Psoas muscle (tissue), 8 donors: ENCODE measurements at regions of chr20 and their contacts with region 1.

Region 1: GRCh38 chr20:36460648-36461599 is 80.4 kb upstream of the MYL9 start:
- DNase-seq: peak; percentile 96 to 97
- ATAC-seq: peak; percentile 67 to 79 (median 70)
- H3K4me3 ChIP-seq: peak overlapping the region; percentile 99
- H3K27ac ChIP-seq: peak overlapping the region; percentile 100
- H3K4me1 ChIP-seq: peaks cover 35% of the 10 kb centered on the region
- H3K27me3 ChIP-seq: no peaks in the 10 kb centered on the region
- CTCF ChIP-seq: no peak

Region 2: DNA sequence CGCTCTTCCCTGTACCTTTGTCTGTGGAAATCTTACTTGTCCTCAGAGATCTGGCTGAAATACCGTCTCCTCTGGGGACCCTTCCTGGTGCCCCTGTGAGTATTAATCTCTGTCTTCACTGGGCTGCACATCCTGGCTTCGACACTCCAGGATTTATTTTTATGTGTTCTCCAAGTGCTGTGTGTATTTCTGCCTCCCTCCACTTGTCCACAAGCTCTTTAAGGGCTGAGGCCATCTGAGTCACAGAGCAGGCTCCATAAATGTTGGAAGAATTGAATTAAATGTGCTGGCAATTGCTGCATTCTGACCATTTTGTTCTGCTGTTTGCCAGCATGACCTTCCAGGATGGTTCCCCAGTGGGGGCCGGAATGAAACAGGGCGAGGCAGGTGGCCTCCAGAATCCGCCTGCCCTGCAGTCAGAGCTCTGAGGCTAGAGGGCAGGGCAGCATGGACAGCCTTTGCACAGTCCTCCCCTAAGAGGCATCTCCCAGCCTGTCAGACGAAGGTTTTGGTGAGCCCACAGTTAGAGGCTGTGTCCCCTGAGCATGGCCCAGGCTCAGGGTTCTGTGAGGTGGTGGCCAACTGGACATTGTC is 49.0 kb before region 1 on chr20:
- intact Hi-C with region 1: no loop called
- DNase-seq: no peak
- ATAC-seq: no peak
- H3K4me3 ChIP-seq: no peak overlapping the region
- H3K27ac ChIP-seq: no peak overlapping the region
- H3K4me1 ChIP-seq: no peaks in the 10 kb centered on the region
- H3K27me3 ChIP-seq: peaks cover 0 to 21% (median 2%) of the 10 kb centered on the region in 3 donors
- CTCF ChIP-seq: no peak

Region 3: DNA sequence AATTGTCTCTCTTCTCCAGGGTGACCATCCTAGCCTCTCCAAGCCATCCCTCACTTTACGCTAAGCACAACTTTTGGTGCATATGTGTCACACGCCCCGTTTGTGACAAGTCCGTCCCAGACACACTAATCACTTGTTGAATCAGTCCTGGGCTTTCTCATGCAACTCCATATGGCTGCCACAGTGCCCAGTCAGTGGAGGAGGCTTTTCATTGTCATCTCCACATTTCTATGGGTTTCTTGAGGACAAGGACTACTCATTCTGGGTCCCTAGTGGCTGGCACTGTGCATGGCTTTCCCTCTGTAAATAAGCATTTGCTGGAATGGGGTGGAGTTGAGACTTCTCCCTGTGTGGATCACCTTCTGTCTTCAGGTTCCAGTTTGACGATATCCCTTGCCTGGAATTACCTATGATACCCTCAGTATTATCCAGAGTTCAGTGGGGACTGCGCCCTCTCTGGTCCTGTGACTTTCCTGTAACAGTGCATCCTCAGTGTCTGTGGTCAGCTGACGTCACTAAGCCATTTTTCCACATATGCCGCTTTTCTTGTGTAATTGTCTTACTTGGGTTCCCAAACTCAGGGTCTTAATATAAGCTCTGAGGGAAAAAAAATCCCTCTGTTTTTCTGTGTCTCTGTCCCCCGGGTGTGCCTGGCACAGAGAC is 20.6 kb after region 1 on chr20:
- intact Hi-C with region 1: loop called in 1 of 2 experiments (anchors 2 kb)
- DNase-seq: peak in 1 of 2 donors; percentile 29
- ATAC-seq: peak; percentile 47 to 58 (median 50)
- H3K4me3 ChIP-seq: peak overlapping the region; percentile 22
- H3K27ac ChIP-seq: peak overlapping the region; percentile 89
- H3K4me1 ChIP-seq: peaks cover 98% of the 10 kb centered on the region
- H3K27me3 ChIP-seq: no peaks in the 10 kb centered on the region
- CTCF ChIP-seq: peak; percentile 27